Activated T-helper 1 cell treated with anti-CD3 and anti-CD28 coated beads, Interleukin-12 subunit alpha, Interleukin-12 subunit beta, Interleukin-2, Interleukin-4 antibody, amounts not matched to agents 30 ng/mL and 10 ng/mL and 1 ng/mL, durations not matched to agents 14 hours and 24 hours and 36 hours (primary cell): ENCODE measurements at regions of chr14 and their contacts with region 1.

Region 1: GRCh38 chr14:92680781-92681650 is 67.4 kb downstream of the LGMN start:
- DNase-seq: peak; percentile 66
- H3K4me3 Mint-ChIP-seq: no peak overlapping the region
- H3K27ac Mint-ChIP-seq: no peak overlapping the region
- H3K4me1 Mint-ChIP-seq: peaks cover 43% of the 10 kb centered on the region
- H3K27me3 Mint-ChIP-seq: no peaks in the 10 kb centered on the region

Region 2: DNA sequence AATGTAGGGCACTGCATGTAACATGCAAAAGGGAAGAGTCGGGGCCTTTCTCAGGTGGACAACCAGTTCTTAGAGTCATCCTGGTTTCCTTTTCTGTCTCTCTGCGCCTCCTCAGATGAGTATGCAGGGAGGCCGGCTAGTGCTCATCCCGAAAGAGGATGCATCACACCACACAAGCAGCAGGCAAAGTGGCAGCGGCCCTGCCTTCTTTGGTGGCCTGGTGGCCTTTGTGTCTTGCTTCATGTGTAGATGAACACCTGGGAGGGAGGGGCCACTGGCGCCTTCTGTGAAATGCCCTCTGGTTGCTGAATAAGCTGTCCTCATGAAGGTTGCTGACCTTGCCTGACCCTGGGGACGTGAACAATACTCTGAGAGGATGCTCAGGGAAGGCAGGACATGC is 340.1 kb before region 1 on chr14:
- intact Hi-C with region 1: loop called (anchors 1 kb)
- DNase-seq: no peak
- H3K4me3 Mint-ChIP-seq: peak overlapping the region; percentile 16
- H3K27ac Mint-ChIP-seq: peak overlapping the region; percentile 53
- H3K4me1 Mint-ChIP-seq: peaks cover 17% of the 10 kb centered on the region
- H3K27me3 Mint-ChIP-seq: peaks cover 30% of the 10 kb centered on the region

Region 3: GRCh38 chr14:92563359-92563758 is 117.7 kb before region 1 on chr14:
- intact Hi-C with region 1: loop called (anchors 1 kb)
- DNase-seq: peak; percentile 38
- H3K4me3 Mint-ChIP-seq: no peak overlapping the region
- H3K27ac Mint-ChIP-seq: peak overlapping the region; percentile 10
- H3K4me1 Mint-ChIP-seq: peaks cover 73% of the 10 kb centered on the region
- H3K27me3 Mint-ChIP-seq: no peaks in the 10 kb centered on the region

Region 4: GRCh38 chr14:92612988-92613658 is 67.9 kb before region 1 on chr14:
- intact Hi-C with region 1: loop called (anchors 1 kb)
- DNase-seq: peak; percentile 20
- H3K4me3 Mint-ChIP-seq: no peak overlapping the region
- H3K27ac Mint-ChIP-seq: no peak overlapping the region
- H3K4me1 Mint-ChIP-seq: peaks cover 51% of the 10 kb centered on the region
- H3K27me3 Mint-ChIP-seq: peaks cover 3% of the 10 kb centered on the region

Region 5: GRCh38 chr14:92637228-92637627 is 43.8 kb before region 1 on chr14:
- intact Hi-C with region 1: no loop called
- DNase-seq: no peak
- H3K4me3 Mint-ChIP-seq: no peak overlapping the region
- H3K27ac Mint-ChIP-seq: no peak overlapping the region
- H3K4me1 Mint-ChIP-seq: peaks cover 23% of the 10 kb centered on the region
- H3K27me3 Mint-ChIP-seq: peaks cover 7% of the 10 kb centered on the region

Region 6: GRCh38 chr14:92922883-92923743 is 242.1 kb after region 1 on chr14 and contains the start of gene CHGA:
- intact Hi-C with region 1: no loop called
- DNase-seq: peak; percentile 41
- H3K4me3 Mint-ChIP-seq: no peak within 1 kb of the TSS
- H3K27ac Mint-ChIP-seq: no peak within 1 kb of the TSS
- H3K4me1 Mint-ChIP-seq: no peaks in the 10 kb centered on the region
- H3K27me3 Mint-ChIP-seq: peaks cover 7% of the 10 kb centered on the region
- total RNA-seq, gene CHGA: not detected in 2 replicates